ENCODE measurements at regions of chr22 and their contacts with region 1.

Region 1: GRCh38 chr22:46798366-46799350 is 36.2 kb downstream of the TBC1D22A start:
- DNase-seq: peak; percentile 81
- H3K4me3 ChIP-seq: no peak overlapping the region
- H3K27ac ChIP-seq: no peak overlapping the region
- H3K4me1 ChIP-seq: peaks cover 5% of the 10 kb centered on the region
- H3K27me3 ChIP-seq: no peaks in the 10 kb centered on the region
- CTCF ChIP-seq: peak; percentile 96 to 98
- POLR2A ChIP-seq: no peak

Region 2: GRCh38 chr22:46320166-46320710 is 478.4 kb before region 1 on chr22:
- CTCF ChIA-PET with region 1: no interaction called
- POLR2A ChIA-PET with region 1: no interaction called
- dilution Hi-C with region 1: no loop called
- intact Hi-C with region 1: no loop called
- DNase-seq: no peak
- H3K4me3 ChIP-seq: no peak overlapping the region
- H3K27ac ChIP-seq: no peak overlapping the region
- H3K4me1 ChIP-seq: no peaks in the 10 kb centered on the region
- H3K27me3 ChIP-seq: no peaks in the 10 kb centered on the region
- CTCF ChIP-seq: no peak
- POLR2A ChIP-seq: no peak

Region 3: GRCh38 chr22:46737976-46738646 is 60.5 kb before region 1 on chr22 and contains the start of gene CERK:
- CTCF ChIA-PET with region 1: interaction called, 5 read pairs
- POLR2A ChIA-PET with region 1: no interaction called
- dilution Hi-C with region 1: no loop called
- intact Hi-C with region 1: loop called (anchors 2 kb)
- DNase-seq: peak; percentile 73
- H3K4me3 ChIP-seq: peak within 1 kb of the TSS; percentile 60 to 97 (median 75)
- H3K27ac ChIP-seq: peak within 1 kb of the TSS; percentile 90
- H3K4me1 ChIP-seq: peaks cover 39% of the 10 kb centered on the region
- H3K27me3 ChIP-seq: no peaks in the 10 kb centered on the region
- CTCF ChIP-seq: no peak
- POLR2A ChIP-seq: peak; percentile 69
- total RNA-seq, gene CERK: 88.0 and 104 TPM in 2 replicates

Region 4: GRCh38 chr22:46815896-46816731 is 17.5 kb after region 1 on chr22:
- CTCF ChIA-PET with region 1: interaction called, 11 read pairs
- POLR2A ChIA-PET with region 1: no interaction called
- dilution Hi-C with region 1: no loop called
- intact Hi-C with region 1: no loop called
- DNase-seq: no peak
- H3K4me3 ChIP-seq: no peak overlapping the region
- H3K27ac ChIP-seq: no peak overlapping the region
- H3K4me1 ChIP-seq: peaks cover 24% of the 10 kb centered on the region
- H3K27me3 ChIP-seq: no peaks in the 10 kb centered on the region
- CTCF ChIP-seq: no peak
- POLR2A ChIP-seq: no peak

Region 5: GRCh38 chr22:47837703-47838102 is 1039.0 kb after region 1 on chr22:
- CTCF ChIA-PET with region 1: no interaction called
- POLR2A ChIA-PET with region 1: no interaction called
- dilution Hi-C with region 1: no loop called
- intact Hi-C with region 1: loop called (anchors 5 kb)
- DNase-seq: no peak
- H3K4me3 ChIP-seq: no peak overlapping the region
- H3K27ac ChIP-seq: no peak overlapping the region
- H3K4me1 ChIP-seq: no peaks in the 10 kb centered on the region
- H3K27me3 ChIP-seq: no peaks in the 10 kb centered on the region
- CTCF ChIP-seq: peak in 1 of 2 donors; percentile 10
- POLR2A ChIP-seq: no peak

Measured in endothelial cell of umbilical vein (primary cell).